ENCODE measurements at regions of chr7 and their contacts with region 1.

Region 1: GRCh38 chr7:5139998-5140397 is 50.0 kb upstream of the WIPI2 start:
- DNase-seq: peak; percentile 39
- ATAC-seq: peak; percentile 91
- H3K4me3 ChIP-seq: no peak overlapping the region
- H3K27ac ChIP-seq: no peak overlapping the region
- H3K4me1 ChIP-seq: no peaks in the 10 kb centered on the region
- H3K27me3 ChIP-seq: no peaks in the 10 kb centered on the region
- CTCF ChIP-seq: peak; percentile 73 to 85 (median 74); a peak in 5 of 6 replicates
- POLR2A ChIP-seq: no peak
- RAD21 ChIP-seq: peak; percentile 81

Region 2: DNA sequence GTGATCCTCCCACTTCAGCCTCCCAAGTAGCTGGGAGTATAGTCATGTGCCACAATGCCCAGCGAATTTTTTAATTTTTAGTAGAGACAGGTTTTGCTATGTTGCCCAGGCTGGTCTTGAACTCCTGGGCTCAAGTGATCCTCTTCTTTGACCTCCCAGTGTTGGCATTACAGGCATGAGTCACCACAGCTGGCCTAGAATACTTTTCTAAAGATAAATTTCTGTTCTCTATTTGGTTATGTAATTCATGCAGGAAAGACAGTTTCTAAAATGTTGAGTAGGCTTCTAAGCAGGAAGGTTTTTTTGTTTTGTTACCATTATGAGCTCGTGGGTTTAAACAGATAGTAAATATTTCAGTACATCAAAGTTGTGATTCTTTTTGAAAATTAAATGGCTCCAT is 89.3 kb before region 1 on chr7:
- CTCF ChIA-PET with region 1: no interaction called
- POLR2A ChIA-PET with region 1: no interaction called
- RAD21 ChIA-PET with region 1: no interaction called
- intact Hi-C with region 1: no loop called
- DNase-seq: no peak
- ATAC-seq: no peak
- H3K4me3 ChIP-seq: no peak overlapping the region
- H3K27ac ChIP-seq: no peak overlapping the region
- H3K4me1 ChIP-seq: peaks cover 3% of the 10 kb centered on the region in 2 experiments; a peak in 1 of 4 replicates
- H3K27me3 ChIP-seq: no peaks in the 10 kb centered on the region
- CTCF ChIP-seq: no peak
- POLR2A ChIP-seq: no peak
- RAD21 ChIP-seq: no peak

Region 3: DNA sequence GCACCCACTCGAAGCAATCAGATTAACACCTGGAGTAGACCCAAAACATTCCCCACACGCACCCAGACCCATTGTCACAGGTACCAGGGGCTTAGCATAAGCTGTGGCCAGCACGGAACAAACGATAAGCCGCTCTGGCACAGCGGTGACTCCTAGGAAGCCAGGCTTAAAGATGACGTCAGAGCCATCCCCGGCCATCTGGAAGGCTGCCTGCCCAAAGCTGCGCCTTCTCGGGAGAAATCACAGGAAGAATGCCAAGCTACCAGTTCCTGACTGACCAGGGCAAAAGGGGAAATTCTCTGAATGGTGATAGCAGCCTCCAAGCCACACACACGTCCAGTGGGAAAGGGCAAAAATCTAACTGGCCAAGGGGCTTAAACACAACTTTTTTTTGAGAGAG is 37.1 kb after region 1 on chr7:
- CTCF ChIA-PET with region 1: interaction called, 4 read pairs
- POLR2A ChIA-PET with region 1: no interaction called
- RAD21 ChIA-PET with region 1: no interaction called
- intact Hi-C with region 1: loop called (anchors 1 kb)
- DNase-seq: no peak
- ATAC-seq: no peak
- H3K4me3 ChIP-seq: no peak overlapping the region
- H3K27ac ChIP-seq: no peak overlapping the region
- H3K4me1 ChIP-seq: peaks cover 0 to 5% of the 10 kb centered on the region in 2 experiments; a peak in 2 of 4 replicates
- H3K27me3 ChIP-seq: no peaks in the 10 kb centered on the region
- CTCF ChIP-seq: no peak
- POLR2A ChIP-seq: no peak
- RAD21 ChIP-seq: no peak